ENCODE measurements at regions of chr11 and their contacts with region 1.

Region 1: GRCh38 chr11:118870396-118871345 is 13.0 kb upstream of the CXCR5 start:
- DNase-seq: peak; percentile 57
- ATAC-seq: peak; percentile 87
- H3K4me3 ChIP-seq: peak overlapping the region; percentile 7; the same call in 1 of the 2 replicates
- H3K27ac ChIP-seq: no peak overlapping the region
- H3K4me1 ChIP-seq: peaks cover 30% of the 10 kb centered on the region
- H3K27me3 ChIP-seq: peaks cover 3 to 7% of the 10 kb centered on the region in 2 experiments
- CTCF ChIP-seq: no peak
- EP300 ChIP-seq: no peak
- POLR2A ChIP-seq: no peak
- RAD21 ChIP-seq: no peak

Region 2: GRCh38 chr11:118883368-118884071 is 12.8 kb after region 1 on chr11 and contains the start of gene CXCR5:
- CTCF ChIA-PET with region 1: interaction called, 7 read pairs
- POLR2A ChIA-PET with region 1: interaction called, 4 read pairs
- RAD21 ChIA-PET with region 1: interaction called, 10 read pairs
- SMC1A ChIA-PET with region 1: interaction called, 20 read pairs
- in situ Hi-C with region 1: no loop called
- intact Hi-C with region 1: no loop called
- DNase-seq: no peak
- ATAC-seq: peak; percentile 81
- H3K4me3 ChIP-seq: peak within 1 kb of the TSS; percentile 13; the same call in 1 of the 2 replicates
- H3K27ac ChIP-seq: no peak within 1 kb of the TSS
- H3K4me1 ChIP-seq: peaks cover 43% of the 10 kb centered on the region
- H3K27me3 ChIP-seq: peaks cover 3 to 9% of the 10 kb centered on the region in 2 experiments; a peak in 2 of 4 replicates
- CTCF ChIP-seq: peak in 2 of 3 experiments; percentile 8 to 27; a peak in 2 of 6 replicates
- EP300 ChIP-seq: no peak
- POLR2A ChIP-seq: peak; percentile 58
- RAD21 ChIP-seq: peak; percentile 30; the same call in 1 of the 2 replicates
- polyA plus RNA-seq, gene CXCR5: 0.03 to 0.11 TPM

Measured in GM12878 (cell line).